Panc1 (cell line): ENCODE measurements at regions of chr9 and their contacts with region 1.

Region 1: GRCh38 chr9:25964239-25964638 is 286.0 kb upstream of the TUSC1 start:
- DNase-seq: peak; percentile 2
- ATAC-seq: no peak
- H3K4me3 ChIP-seq: no peak overlapping the region
- H3K27ac ChIP-seq: no peak overlapping the region
- H3K4me1 ChIP-seq: no peaks in the 10 kb centered on the region
- H3K27me3 ChIP-seq: no peaks in the 10 kb centered on the region
- CTCF ChIP-seq: 0 out of 2 replicates have a peak, but pooled peaks have one; percentile 15

Region 2: DNA sequence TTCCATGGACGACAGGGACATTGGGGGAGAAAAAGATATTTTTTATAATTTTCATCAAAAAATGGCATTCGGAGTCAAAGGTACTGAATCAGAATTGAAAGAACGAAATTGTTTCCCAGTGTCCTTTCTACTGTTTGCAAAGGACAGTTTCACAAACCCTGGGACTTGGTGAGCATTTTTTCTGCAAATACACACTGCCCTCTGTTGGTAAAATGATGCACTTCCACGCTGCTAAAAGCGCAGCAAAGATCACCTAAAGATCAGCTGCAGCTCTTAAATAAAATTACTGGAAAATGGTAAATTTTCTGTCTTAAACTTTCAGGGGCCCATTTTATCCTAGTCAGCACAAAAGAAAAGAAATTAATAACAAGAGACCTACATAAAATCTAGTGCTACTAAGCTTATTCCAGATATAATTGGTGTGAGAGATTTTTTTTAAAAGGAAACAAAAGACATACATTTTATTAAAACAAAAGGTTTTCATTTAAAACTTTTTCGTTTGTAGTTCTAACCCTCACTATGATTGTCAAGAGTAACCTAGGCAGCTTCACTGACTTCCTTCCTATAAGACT is 362.3 kb after region 1 on chr9:
- CTCF ChIA-PET with region 1: no interaction called
- POLR2A ChIA-PET with region 1: no interaction called
- in situ Hi-C with region 1: no loop called
- intact Hi-C with region 1: loop called (anchors 10 kb)
- DNase-seq: peak; percentile 28
- ATAC-seq: no peak
- H3K4me3 ChIP-seq: no peak overlapping the region
- H3K27ac ChIP-seq: no peak overlapping the region
- H3K4me1 ChIP-seq: no peaks in the 10 kb centered on the region
- H3K27me3 ChIP-seq: no peaks in the 10 kb centered on the region
- CTCF ChIP-seq: peak; percentile 53; the same call in 1 of the 2 replicates